Activated B cell treated with CpG ODN at 0.5 μM for 24 hours (primary cell): ENCODE measurements at regions of chr9 and their contacts with region 1.

Region 1: DNA sequence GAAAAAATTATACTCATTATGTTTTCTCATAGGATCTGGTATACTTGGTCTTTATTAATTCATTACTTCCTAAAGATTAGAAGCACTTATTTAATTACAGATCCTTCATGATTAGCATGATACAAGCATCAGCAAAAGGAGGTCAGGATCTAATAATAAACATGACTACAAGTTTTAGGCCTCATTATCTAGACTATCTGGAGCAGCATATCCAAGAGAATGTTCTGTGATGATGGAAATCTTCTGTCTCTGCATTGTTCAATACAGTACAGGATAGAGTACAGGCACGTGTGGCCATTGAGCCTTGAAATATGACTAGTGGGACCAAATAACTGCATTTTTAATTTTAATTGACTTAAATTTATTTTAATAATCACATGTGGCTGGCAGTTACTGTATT is 21.2 kb downstream of the SETX start:
- DNase-seq: no peak
- ATAC-seq: no peak
- H3K4me3 Mint-ChIP-seq: no peak overlapping the region
- H3K27ac Mint-ChIP-seq: no peak overlapping the region
- H3K4me1 Mint-ChIP-seq: peaks cover 4% of the 10 kb centered on the region
- H3K27me3 Mint-ChIP-seq: no peaks in the 10 kb centered on the region
- CTCF ChIP-seq: no peak

Region 2: GRCh38 chr9:132274861-132275260 is 58.7 kb before region 1 on chr9:
- CTCF ChIA-PET with region 1: no interaction called
- POLR2A ChIA-PET with region 1: no interaction called
- intact Hi-C with region 1: loop called (anchors 10 kb)
- DNase-seq: no peak
- ATAC-seq: no peak
- H3K4me3 Mint-ChIP-seq: no peak overlapping the region
- H3K27ac Mint-ChIP-seq: no peak overlapping the region
- H3K4me1 Mint-ChIP-seq: no peaks in the 10 kb centered on the region
- H3K27me3 Mint-ChIP-seq: no peaks in the 10 kb centered on the region
- CTCF ChIP-seq: no peak